ENCODE measurements at regions of chr5 and their contacts with region 1.

Region 1: GRCh38 chr5:72816311-72817145 is at the start of gene TNPO1:
- DNase-seq: peak; percentile 91 to 92
- ATAC-seq: peak; percentile 80 to 92 (median 85)
- H3K4me3 ChIP-seq: peak within 1 kb of the TSS; percentile 87
- H3K4me3 Mint-ChIP-seq: peak within 1 kb of the TSS; percentile 95
- H3K27ac ChIP-seq: peak within 1 kb of the TSS; percentile 83
- H3K27ac Mint-ChIP-seq: peak within 1 kb of the TSS; percentile 91 to 96
- H3K4me1 ChIP-seq: peaks cover 5% of the 10 kb centered on the region
- H3K4me1 Mint-ChIP-seq: peaks cover 18 to 22% of the 10 kb centered on the region in 2 donors
- H3K27me3 ChIP-seq: peaks cover 2% of the 10 kb centered on the region
- H3K27me3 Mint-ChIP-seq: peaks cover 10 to 16% of the 10 kb centered on the region in 2 donors
- CTCF ChIP-seq: no peak
- total RNA-seq, gene TNPO1: 64.9 to 98.3 (median 97.6) TPM

Region 2: GRCh38 chr5:72366324-72366976 is 450.1 kb before region 1 on chr5:
- intact Hi-C with region 1: loop called (anchors 2 kb)
- DNase-seq: peak in 1 of 2 donors; percentile 51
- ATAC-seq: peak in 2 of 3 donors; percentile 49 to 79
- H3K4me3 ChIP-seq: no peak overlapping the region
- H3K4me3 Mint-ChIP-seq: no peak overlapping the region
- H3K27ac ChIP-seq: no peak overlapping the region
- H3K27ac Mint-ChIP-seq: no peak overlapping the region
- H3K4me1 ChIP-seq: no peaks in the 10 kb centered on the region
- H3K4me1 Mint-ChIP-seq: peaks cover 0 to 6% of the 10 kb centered on the region in 2 donors
- H3K27me3 ChIP-seq: no peaks in the 10 kb centered on the region
- H3K27me3 Mint-ChIP-seq: no peaks in the 10 kb centered on the region
- CTCF ChIP-seq: peak; percentile 55

Region 3: GRCh38 chr5:72611118-72611730 is 205.3 kb before region 1 on chr5:
- intact Hi-C with region 1: loop called (anchors 1 kb)
- DNase-seq: peak; percentile 31 to 60
- ATAC-seq: peak; percentile 64 to 80 (median 68)
- H3K4me3 ChIP-seq: no peak overlapping the region
- H3K4me3 Mint-ChIP-seq: no peak overlapping the region
- H3K27ac ChIP-seq: no peak overlapping the region
- H3K27ac Mint-ChIP-seq: no peak overlapping the region
- H3K4me1 ChIP-seq: peaks cover 2% of the 10 kb centered on the region
- H3K4me1 Mint-ChIP-seq: peaks cover 6 to 7% of the 10 kb centered on the region in 2 donors
- H3K27me3 ChIP-seq: no peaks in the 10 kb centered on the region
- H3K27me3 Mint-ChIP-seq: peaks cover 7 to 15% of the 10 kb centered on the region in 2 donors
- CTCF ChIP-seq: peak; percentile 76

Region 4: GRCh38 chr5:72847989-72848473 is 31.5 kb after region 1 on chr5:
- intact Hi-C with region 1: loop called (anchors 1 kb)
- DNase-seq: peak; percentile 88 to 90
- ATAC-seq: peak; percentile 79 to 91 (median 84)
- H3K4me3 ChIP-seq: peak overlapping the region; percentile 81
- H3K4me3 Mint-ChIP-seq: peak overlapping the region; percentile 95
- H3K27ac ChIP-seq: peak overlapping the region; percentile 77
- H3K27ac Mint-ChIP-seq: peak overlapping the region; percentile 93 to 97
- H3K4me1 ChIP-seq: peaks cover 6% of the 10 kb centered on the region
- H3K4me1 Mint-ChIP-seq: peaks cover 46% of the 10 kb centered on the region in 2 donors
- H3K27me3 ChIP-seq: no peaks in the 10 kb centered on the region
- H3K27me3 Mint-ChIP-seq: no peaks in the 10 kb centered on the region
- CTCF ChIP-seq: no peak

Region 5: DNA sequence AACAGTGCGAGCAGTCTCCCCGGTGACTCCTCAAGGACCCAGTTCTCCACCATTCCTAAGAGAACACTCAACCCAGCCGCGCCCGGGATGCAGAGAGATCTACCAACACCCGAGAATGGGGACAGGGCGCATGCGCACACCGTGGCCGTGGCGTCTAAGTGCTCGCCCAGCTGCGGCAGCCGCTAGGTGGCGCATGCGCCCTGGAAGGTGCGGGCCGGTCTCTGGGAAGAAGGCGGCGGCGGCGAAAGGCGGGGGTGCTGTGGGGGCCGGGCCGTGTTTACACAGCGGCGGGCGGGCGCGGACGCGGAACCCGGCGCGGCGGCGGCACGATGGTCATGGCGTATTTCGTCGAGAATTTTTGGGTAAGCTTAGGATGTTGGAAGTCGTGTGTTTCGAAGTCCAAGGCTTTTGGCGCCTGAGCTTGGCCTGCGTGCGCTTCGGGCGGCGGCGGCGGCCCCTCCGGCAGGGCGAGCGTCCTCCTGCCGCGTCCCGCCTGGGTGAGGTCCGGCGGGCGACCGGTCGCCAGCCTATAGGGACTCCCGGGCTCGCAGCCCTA is 139.3 kb after region 1 on chr5 and contains the start of gene FCHO2:
- intact Hi-C with region 1: loop called (anchors 5 kb)
- DNase-seq: peak; percentile 98
- ATAC-seq: peak; percentile 96 to 99 (median 97)
- H3K4me3 ChIP-seq: peak within 1 kb of the TSS; percentile 51
- H3K4me3 Mint-ChIP-seq: peak within 1 kb of the TSS; percentile 95
- H3K27ac ChIP-seq: peak within 1 kb of the TSS; percentile 23
- H3K27ac Mint-ChIP-seq: peak within 1 kb of the TSS; percentile 82 to 98
- H3K4me1 ChIP-seq: peaks cover 10% of the 10 kb centered on the region
- H3K4me1 Mint-ChIP-seq: peaks cover 27 to 33% of the 10 kb centered on the region in 2 donors
- H3K27me3 ChIP-seq: peaks cover 11% of the 10 kb centered on the region
- H3K27me3 Mint-ChIP-seq: peaks cover 0 to 6% of the 10 kb centered on the region in 2 donors
- CTCF ChIP-seq: peak; percentile 70
- total RNA-seq, gene FCHO2: 18.5 to 23.4 (median 22.7) TPM

Region 6: DNA sequence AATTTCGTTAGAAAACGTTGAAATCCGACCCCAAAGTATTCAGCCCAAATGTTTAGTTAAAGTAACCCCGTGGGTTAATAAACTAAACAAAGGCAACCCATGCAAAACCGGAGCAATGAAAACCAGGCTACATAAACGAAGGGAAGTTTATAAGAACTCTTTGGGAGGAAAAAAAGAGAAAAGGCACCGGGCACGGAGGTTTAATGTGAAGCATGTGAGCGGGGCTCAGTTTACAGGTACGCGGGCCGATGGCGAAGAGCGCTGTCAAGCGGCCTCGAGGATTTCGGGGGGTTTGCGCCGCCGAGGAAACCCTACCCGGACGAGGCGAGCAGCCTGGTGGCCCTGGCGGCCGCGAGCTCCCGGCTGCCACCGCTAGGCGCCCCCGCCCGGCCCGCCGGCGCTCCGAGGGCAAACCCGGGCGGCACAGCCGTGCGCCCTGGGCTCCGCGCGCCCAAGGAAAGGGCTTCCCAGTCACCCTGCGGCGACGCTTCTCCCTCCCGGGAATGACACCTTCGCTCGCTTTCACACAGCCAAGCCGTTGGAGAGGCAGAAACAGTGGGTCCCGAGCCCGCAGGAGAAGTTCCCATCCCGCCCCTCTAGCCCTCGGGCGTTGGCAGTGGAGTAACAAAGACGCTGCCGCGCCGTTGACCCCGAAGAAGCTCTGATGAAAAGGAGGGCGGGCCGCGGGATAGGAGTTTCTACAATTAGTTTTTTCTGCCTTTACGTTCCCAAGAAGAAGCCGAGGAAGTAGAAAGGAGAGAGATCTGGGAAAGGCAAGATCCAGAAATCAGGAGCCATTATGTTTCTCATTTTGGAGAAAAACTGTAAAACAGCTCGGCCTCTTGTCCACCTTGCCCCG is 482.5 kb after region 1 on chr5:
- intact Hi-C with region 1: no loop called
- DNase-seq: peak in 1 of 2 donors; percentile 32
- ATAC-seq: no peak
- H3K4me3 ChIP-seq: no peak overlapping the region
- H3K4me3 Mint-ChIP-seq: no peak overlapping the region
- H3K27ac ChIP-seq: no peak overlapping the region
- H3K27ac Mint-ChIP-seq: no peak overlapping the region
- H3K4me1 ChIP-seq: no peaks in the 10 kb centered on the region
- H3K4me1 Mint-ChIP-seq: peaks cover 0 to 4% of the 10 kb centered on the region in 2 donors
- H3K27me3 ChIP-seq: peaks cover 43% of the 10 kb centered on the region
- H3K27me3 Mint-ChIP-seq: peaks cover 69 to 96% of the 10 kb centered on the region in 2 donors
- CTCF ChIP-seq: no peak

Measured in natural killer cell (primary cell).